CD8-positive, alpha-beta T cell (primary cell): ENCODE measurements at regions of chr3 and their contacts with region 1.

Region 1: GRCh38 chr3:196073188-196073838 is 8.6 kb downstream of the TFRC start:
- DNase-seq: peak; percentile 45 to 87 (median 70)
- ATAC-seq: peak; percentile 98
- H3K4me3 ChIP-seq: no peak overlapping the region
- H3K4me3 Mint-ChIP-seq: no peak overlapping the region
- H3K27ac ChIP-seq: no peak overlapping the region
- H3K27ac Mint-ChIP-seq: peak overlapping the region; percentile 29
- H3K4me1 ChIP-seq: no peaks in the 10 kb centered on the region
- H3K4me1 Mint-ChIP-seq: peaks cover 19% of the 10 kb centered on the region
- H3K27me3 ChIP-seq: no peaks in the 10 kb centered on the region
- H3K27me3 Mint-ChIP-seq: no peaks in the 10 kb centered on the region
- CTCF ChIP-seq: peak; percentile 63

Region 2: GRCh38 chr3:195999896-196000295 is 73.4 kb before region 1 on chr3:
- CTCF ChIA-PET with region 1: no interaction called
- POLR2A ChIA-PET with region 1: no interaction called
- intact Hi-C with region 1: no loop called
- DNase-seq: no peak
- ATAC-seq: no peak
- H3K4me3 ChIP-seq: no peak overlapping the region
- H3K4me3 Mint-ChIP-seq: no peak overlapping the region
- H3K27ac ChIP-seq: no peak overlapping the region
- H3K27ac Mint-ChIP-seq: no peak overlapping the region
- H3K4me1 ChIP-seq: no peaks in the 10 kb centered on the region
- H3K4me1 Mint-ChIP-seq: no peaks in the 10 kb centered on the region
- H3K27me3 ChIP-seq: no peaks in the 10 kb centered on the region
- H3K27me3 Mint-ChIP-seq: peaks cover 9% of the 10 kb centered on the region
- CTCF ChIP-seq: no peak

Region 3: DNA sequence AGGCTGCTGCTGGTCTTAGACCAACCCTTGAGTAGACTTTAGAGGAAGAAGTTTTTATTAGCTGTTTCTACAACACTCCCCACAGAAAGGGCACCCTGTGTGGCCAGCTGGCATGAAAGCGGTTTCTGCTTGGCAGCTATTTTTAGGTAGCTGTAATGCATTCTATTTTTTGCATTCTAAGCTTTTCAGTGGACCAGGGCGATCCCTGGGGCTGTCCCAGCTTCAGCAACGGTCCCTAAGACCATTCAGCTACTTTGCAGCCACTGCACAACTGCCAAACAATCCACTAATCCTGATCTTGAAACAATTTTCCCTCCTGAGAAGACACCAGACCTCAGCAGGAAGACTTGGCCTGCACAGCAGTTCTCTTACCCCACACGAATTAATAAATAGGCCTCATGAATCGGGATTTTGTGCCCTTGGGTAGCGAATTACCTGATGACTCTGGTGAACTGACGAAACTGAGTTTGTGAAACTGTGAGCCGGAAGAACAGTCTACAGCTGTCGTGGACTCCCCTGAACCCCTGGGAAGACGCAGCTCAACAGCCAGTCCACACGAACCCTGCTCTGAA is 23.2 kb after region 1 on chr3:
- CTCF ChIA-PET with region 1: interaction called, 10 read pairs
- POLR2A ChIA-PET with region 1: no interaction called
- intact Hi-C with region 1: no loop called
- DNase-seq: no peak
- ATAC-seq: no peak
- H3K4me3 ChIP-seq: no peak overlapping the region
- H3K4me3 Mint-ChIP-seq: no peak overlapping the region
- H3K27ac ChIP-seq: no peak overlapping the region
- H3K27ac Mint-ChIP-seq: no peak overlapping the region
- H3K4me1 ChIP-seq: no peaks in the 10 kb centered on the region
- H3K4me1 Mint-ChIP-seq: peaks cover 5% of the 10 kb centered on the region
- H3K27me3 ChIP-seq: no peaks in the 10 kb centered on the region
- H3K27me3 Mint-ChIP-seq: no peaks in the 10 kb centered on the region
- CTCF ChIP-seq: no peak

Region 4: DNA sequence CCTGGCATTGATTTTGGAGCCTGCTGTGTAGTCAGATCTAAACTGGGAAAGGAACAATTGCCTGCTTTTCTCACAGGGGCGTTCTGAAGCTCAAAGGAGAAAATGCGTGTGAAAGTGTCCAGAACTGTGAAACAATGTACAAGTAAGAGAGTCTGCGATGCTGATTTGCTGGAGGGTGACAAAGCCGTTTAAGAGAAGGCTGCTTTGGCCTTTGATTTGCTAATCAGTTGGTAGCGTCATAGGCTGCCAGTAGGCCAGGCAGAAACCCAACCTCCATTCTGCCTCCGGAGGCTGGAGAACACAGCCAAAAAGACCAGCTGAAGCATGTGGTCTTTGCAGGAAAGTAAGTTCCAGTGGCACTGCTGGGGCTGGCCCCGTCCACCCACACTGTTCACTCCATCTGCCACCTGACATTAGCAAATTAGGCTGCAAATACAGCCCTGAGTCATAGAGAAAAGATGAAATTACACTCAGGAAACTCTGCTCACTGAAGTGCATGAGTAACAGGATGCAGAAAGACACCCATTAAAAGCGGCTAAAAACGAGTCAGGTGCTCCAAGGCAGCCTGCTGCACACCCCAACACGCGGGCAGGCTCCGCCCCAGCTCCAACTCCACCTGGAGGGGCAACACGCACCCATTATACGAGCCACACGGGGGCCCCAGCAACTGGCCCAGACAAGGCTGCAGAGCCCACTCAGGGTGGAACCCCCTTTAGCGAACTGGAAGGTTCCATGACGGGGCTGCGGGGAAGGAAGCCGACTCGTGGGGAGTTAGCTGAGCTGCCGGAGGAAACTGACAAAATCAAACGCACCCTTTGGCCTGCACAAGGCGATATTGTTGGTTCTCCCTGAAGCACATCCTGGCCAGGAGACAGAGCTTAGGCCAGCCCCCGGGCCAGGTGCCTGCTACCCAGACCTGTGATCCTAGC is 106.3 kb after region 1 on chr3:
- CTCF ChIA-PET with region 1: interaction called, 59 read pairs
- POLR2A ChIA-PET with region 1: interaction called, 12 read pairs
- intact Hi-C with region 1: no loop called
- DNase-seq: peak; percentile 51 to 97 (median 87)
- ATAC-seq: peak; percentile 92
- H3K4me3 ChIP-seq: peak overlapping the region; percentile 32
- H3K4me3 Mint-ChIP-seq: peak overlapping the region; percentile 74
- H3K27ac ChIP-seq: peak overlapping the region; percentile 53 to 91
- H3K27ac Mint-ChIP-seq: peak overlapping the region; percentile 98
- H3K4me1 ChIP-seq: peaks cover 38% of the 10 kb centered on the region
- H3K4me1 Mint-ChIP-seq: peaks cover 34% of the 10 kb centered on the region
- H3K27me3 ChIP-seq: no peaks in the 10 kb centered on the region
- H3K27me3 Mint-ChIP-seq: no peaks in the 10 kb centered on the region
- CTCF ChIP-seq: peak; percentile 48

Region 5: DNA sequence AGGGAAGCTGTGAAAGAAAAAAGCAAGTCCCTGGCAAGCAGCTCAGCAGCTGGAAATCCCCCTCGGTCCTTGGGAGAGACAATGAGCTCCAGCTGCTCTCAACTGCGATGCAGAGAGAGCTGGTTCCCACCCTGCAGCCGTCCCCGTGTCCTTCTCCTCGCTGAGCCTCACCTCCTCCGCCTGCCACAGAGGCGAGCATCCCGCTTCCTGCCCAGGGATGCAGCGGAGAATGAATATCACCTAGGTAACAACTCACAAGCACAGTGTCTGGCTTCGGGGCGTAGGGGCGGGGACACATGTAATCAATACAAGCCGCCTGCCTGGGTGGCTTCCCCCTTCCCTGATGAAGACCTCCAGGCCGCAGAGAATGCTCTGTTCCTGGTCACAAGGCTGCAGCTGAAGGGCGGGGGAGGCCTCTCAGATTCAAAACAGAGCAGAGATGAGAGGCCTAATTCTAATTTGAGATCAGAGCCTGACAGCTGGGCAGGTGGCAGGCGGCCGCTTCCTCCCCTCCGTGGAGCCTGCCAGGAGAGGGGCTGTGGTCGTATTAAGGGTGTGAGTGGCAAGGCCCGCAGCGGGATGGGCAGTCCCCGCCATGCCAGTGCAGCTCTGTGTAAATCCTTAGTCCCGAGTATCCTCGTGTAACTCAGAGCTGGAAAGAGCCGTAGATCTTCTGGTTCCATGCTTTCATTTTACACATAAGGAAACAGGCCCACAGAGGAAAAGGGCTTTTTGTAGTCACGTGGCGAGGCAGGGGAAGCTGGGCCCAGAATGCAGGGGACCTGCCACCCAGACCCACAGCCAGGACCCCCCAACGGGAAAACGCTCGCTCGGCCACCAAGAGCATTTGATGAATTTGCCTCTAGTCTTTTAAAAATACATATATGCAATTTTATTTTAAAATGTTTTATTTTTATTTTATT is 113.6 kb after region 1 on chr3:
- CTCF ChIA-PET with region 1: interaction called, 313 read pairs
- POLR2A ChIA-PET with region 1: interaction called, 3 read pairs
- intact Hi-C with region 1: no loop called
- DNase-seq: peak in 2 of 9 experiments; percentile 35 to 66
- ATAC-seq: peak; percentile 27
- H3K4me3 ChIP-seq: peak overlapping the region in 1 of 2 experiments; percentile 21
- H3K4me3 Mint-ChIP-seq: peak overlapping the region; percentile 59
- H3K27ac ChIP-seq: peak overlapping the region in 1 of 2 experiments; percentile 72
- H3K27ac Mint-ChIP-seq: peak overlapping the region; percentile 74
- H3K4me1 ChIP-seq: peaks cover 12% of the 10 kb centered on the region
- H3K4me1 Mint-ChIP-seq: peaks cover 17% of the 10 kb centered on the region
- H3K27me3 ChIP-seq: no peaks in the 10 kb centered on the region
- H3K27me3 Mint-ChIP-seq: no peaks in the 10 kb centered on the region
- CTCF ChIP-seq: no peak

Region 6: DNA sequence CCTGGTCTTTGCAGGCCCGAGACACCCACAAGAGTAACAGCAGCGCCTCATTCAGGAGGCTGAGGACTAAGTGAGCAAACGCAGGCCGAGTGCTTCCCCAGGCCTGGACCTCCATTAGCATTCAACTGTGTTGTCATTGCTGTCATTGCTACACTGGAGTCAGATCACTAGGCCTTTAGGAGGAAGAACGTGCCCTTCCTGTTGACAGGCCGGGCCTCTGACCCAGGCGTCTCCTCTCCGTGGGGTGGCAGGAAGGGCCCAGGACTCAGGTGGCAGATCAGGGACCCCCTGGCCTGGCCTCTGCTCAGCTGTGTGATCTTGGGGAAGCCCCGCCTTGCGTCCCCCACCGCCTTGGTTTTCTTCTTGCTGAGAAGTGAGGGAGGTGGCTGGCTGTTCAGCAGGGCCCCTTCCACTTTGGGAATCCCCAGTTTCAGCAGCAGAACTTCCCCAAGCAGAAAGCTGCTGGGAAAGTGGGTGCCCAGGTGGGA is 118.8 kb after region 1 on chr3:
- CTCF ChIA-PET with region 1: interaction called, 313 read pairs
- POLR2A ChIA-PET with region 1: interaction called, 6 read pairs
- intact Hi-C with region 1: loop called (anchors 1 kb)
- DNase-seq: peak in 7 of 9 experiments; percentile 12 to 87 (median 51)
- ATAC-seq: peak; percentile 39
- H3K4me3 ChIP-seq: no peak overlapping the region
- H3K4me3 Mint-ChIP-seq: peak overlapping the region; percentile 39
- H3K27ac ChIP-seq: peak overlapping the region; percentile 16 to 79
- H3K27ac Mint-ChIP-seq: peak overlapping the region; percentile 92
- H3K4me1 ChIP-seq: peaks cover 22% of the 10 kb centered on the region
- H3K4me1 Mint-ChIP-seq: peaks cover 18% of the 10 kb centered on the region
- H3K27me3 ChIP-seq: no peaks in the 10 kb centered on the region
- H3K27me3 Mint-ChIP-seq: no peaks in the 10 kb centered on the region
- CTCF ChIP-seq: no peak

Region 7: GRCh38 chr3:196207833-196208607 is 134.7 kb after region 1 on chr3:
- CTCF ChIA-PET with region 1: interaction called, 11 read pairs
- POLR2A ChIA-PET with region 1: interaction called, 4 read pairs
- intact Hi-C with region 1: no loop called
- DNase-seq: peak; percentile 34 to 83 (median 64)
- ATAC-seq: peak; percentile 78
- H3K4me3 ChIP-seq: peak overlapping the region; percentile 57 to 71
- H3K4me3 Mint-ChIP-seq: peak overlapping the region; percentile 85
- H3K27ac ChIP-seq: no peak overlapping the region
- H3K27ac Mint-ChIP-seq: peak overlapping the region; percentile 38
- H3K4me1 ChIP-seq: peaks cover 7% of the 10 kb centered on the region
- H3K4me1 Mint-ChIP-seq: peaks cover 12% of the 10 kb centered on the region
- H3K27me3 ChIP-seq: no peaks in the 10 kb centered on the region
- H3K27me3 Mint-ChIP-seq: no peaks in the 10 kb centered on the region
- CTCF ChIP-seq: no peak

Region 8: GRCh38 chr3:196518966-196519717 is 445.8 kb after region 1 on chr3:
- CTCF ChIA-PET with region 1: no interaction called
- POLR2A ChIA-PET with region 1: no interaction called
- intact Hi-C with region 1: loop called in 1 of 2 experiments (anchors 2 kb)
- DNase-seq: peak in 8 of 9 experiments; percentile 15 to 75 (median 62)
- ATAC-seq: no peak
- H3K4me3 ChIP-seq: peak overlapping the region in 1 of 2 experiments; percentile 1
- H3K4me3 Mint-ChIP-seq: no peak overlapping the region
- H3K27ac ChIP-seq: no peak overlapping the region
- H3K27ac Mint-ChIP-seq: no peak overlapping the region
- H3K4me1 ChIP-seq: no peaks in the 10 kb centered on the region
- H3K4me1 Mint-ChIP-seq: no peaks in the 10 kb centered on the region
- H3K27me3 ChIP-seq: no peaks in the 10 kb centered on the region
- H3K27me3 Mint-ChIP-seq: no peaks in the 10 kb centered on the region
- CTCF ChIP-seq: peak; percentile 28

Region 9: DNA sequence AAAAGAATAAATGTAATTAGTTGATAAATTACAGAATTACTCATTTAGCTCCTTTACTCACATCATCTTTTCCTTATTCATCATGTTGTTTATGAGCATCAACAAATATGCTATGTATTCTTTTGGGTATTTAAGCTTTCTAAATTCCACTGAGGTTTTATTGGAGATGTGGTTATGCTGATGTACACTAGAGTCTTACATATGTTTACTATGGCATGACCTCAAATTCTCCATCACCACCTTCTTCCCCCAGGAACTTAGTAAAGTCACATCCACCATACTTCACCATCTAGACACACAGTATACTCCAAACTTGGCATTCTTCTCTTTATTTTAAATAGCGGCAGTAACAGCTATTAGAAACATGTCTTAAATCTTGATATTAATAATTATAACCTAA is 1030.5 kb after region 1 on chr3:
- CTCF ChIA-PET with region 1: no interaction called
- POLR2A ChIA-PET with region 1: no interaction called
- intact Hi-C with region 1: no loop called
- DNase-seq: no peak
- ATAC-seq: no peak
- H3K4me3 ChIP-seq: no peak overlapping the region
- H3K4me3 Mint-ChIP-seq: no peak overlapping the region
- H3K27ac ChIP-seq: no peak overlapping the region
- H3K27ac Mint-ChIP-seq: no peak overlapping the region
- H3K4me1 ChIP-seq: no peaks in the 10 kb centered on the region
- H3K4me1 Mint-ChIP-seq: no peaks in the 10 kb centered on the region
- H3K27me3 ChIP-seq: no peaks in the 10 kb centered on the region
- H3K27me3 Mint-ChIP-seq: no peaks in the 10 kb centered on the region
- CTCF ChIP-seq: no peak

Region 10: GRCh38 chr3:198051836-198052235 is 1978.5 kb after region 1 on chr3:
- CTCF ChIA-PET with region 1: no interaction called
- POLR2A ChIA-PET with region 1: no interaction called
- intact Hi-C with region 1: no loop called
- DNase-seq: no peak
- ATAC-seq: no peak
- H3K4me3 ChIP-seq: no peak overlapping the region
- H3K4me3 Mint-ChIP-seq: no peak overlapping the region
- H3K27ac ChIP-seq: no peak overlapping the region
- H3K27ac Mint-ChIP-seq: no peak overlapping the region
- H3K4me1 ChIP-seq: no peaks in the 10 kb centered on the region
- H3K4me1 Mint-ChIP-seq: no peaks in the 10 kb centered on the region
- H3K27me3 ChIP-seq: no peaks in the 10 kb centered on the region
- H3K27me3 Mint-ChIP-seq: peaks cover 12% of the 10 kb centered on the region
- CTCF ChIP-seq: no peak